IMR-90 (cell line): ENCODE measurements at regions of chr14 and their contacts with region 1.

Region 1: DNA sequence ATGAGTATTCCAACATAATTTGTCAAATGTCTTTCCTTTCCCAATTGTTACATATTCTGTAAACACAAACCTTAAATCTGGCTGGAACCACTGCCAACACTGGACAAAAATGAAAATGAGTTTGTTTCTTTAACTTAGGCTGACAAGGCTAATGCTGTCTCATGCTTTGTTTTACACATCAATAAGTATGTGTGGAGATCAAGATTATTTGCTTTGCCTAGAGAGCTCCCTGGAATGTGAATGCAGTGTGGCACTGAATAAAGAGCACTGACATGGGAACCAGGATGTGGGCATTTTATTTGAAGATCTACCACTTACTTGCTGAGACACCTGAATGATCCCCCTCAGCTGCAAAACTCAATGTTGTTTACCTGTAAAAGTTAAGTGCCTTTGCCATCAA is 61.7 kb downstream of the RALGAPA1 start:
- DNase-seq: peak; percentile 61
- ATAC-seq: peak; percentile 82
- H3K4me3 ChIP-seq: no peak overlapping the region
- H3K27ac ChIP-seq: no peak overlapping the region
- H3K4me1 ChIP-seq: peaks cover 2% of the 10 kb centered on the region; the same call in 1 of the 2 replicates
- H3K27me3 ChIP-seq: no peaks in the 10 kb centered on the region
- CTCF ChIP-seq: no peak
- POLR2A ChIP-seq: no peak
- RAD21 ChIP-seq: no peak

Region 2: GRCh38 chr14:34997762-34998161 is 749.6 kb before region 1 on chr14:
- CTCF ChIA-PET with region 1: no interaction called
- POLR2A ChIA-PET with region 1: no interaction called
- dilution Hi-C with region 1: no loop called
- in situ Hi-C with region 1: no loop called
- intact Hi-C with region 1: no loop called
- DNase-seq: no peak
- ATAC-seq: peak; percentile 57; the same call in 1 of the 2 replicates
- H3K4me3 ChIP-seq: no peak overlapping the region
- H3K27ac ChIP-seq: no peak overlapping the region; the same call in 1 of the 2 replicates
- H3K4me1 ChIP-seq: 0 out of 2 replicates have a peak, but pooled peaks cover 2% of the 10 kb centered on the region
- H3K27me3 ChIP-seq: no peaks in the 10 kb centered on the region
- CTCF ChIP-seq: no peak
- POLR2A ChIP-seq: no peak
- RAD21 ChIP-seq: no peak

Region 3: DNA sequence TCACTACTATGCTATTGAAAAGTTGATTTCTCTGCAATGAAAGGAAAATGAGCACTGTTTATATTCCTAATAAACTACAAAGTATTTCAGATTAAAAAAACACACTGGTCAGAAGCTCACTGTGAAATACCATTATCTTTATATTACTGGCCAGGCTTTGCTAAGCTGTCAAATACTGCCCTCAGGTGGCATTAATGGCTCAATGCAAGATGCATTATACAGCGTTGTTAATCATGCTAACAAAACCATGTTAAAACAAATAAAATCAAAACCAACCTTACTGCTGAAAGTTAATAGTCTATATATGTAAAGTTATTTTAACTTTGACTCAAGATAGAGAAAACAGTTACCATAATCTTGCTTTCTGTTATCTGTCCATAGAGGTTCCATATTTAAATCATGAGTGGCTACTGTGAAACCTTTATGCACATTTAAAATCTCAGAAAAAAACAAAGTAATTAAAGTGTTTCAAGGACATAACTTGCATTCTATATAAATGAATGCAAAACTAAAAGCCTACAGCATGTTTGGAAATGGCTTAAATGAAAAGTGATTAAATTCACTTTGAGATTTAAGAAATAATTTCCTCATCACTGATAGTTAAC is 59.9 kb before region 1 on chr14:
- CTCF ChIA-PET with region 1: no interaction called
- POLR2A ChIA-PET with region 1: no interaction called
- dilution Hi-C with region 1: no loop called
- in situ Hi-C with region 1: no loop called
- intact Hi-C with region 1: no loop called
- DNase-seq: peak; percentile 68
- ATAC-seq: peak; percentile 93
- H3K4me3 ChIP-seq: no peak overlapping the region
- H3K27ac ChIP-seq: no peak overlapping the region
- H3K4me1 ChIP-seq: peaks cover 4% of the 10 kb centered on the region
- H3K27me3 ChIP-seq: no peaks in the 10 kb centered on the region
- CTCF ChIP-seq: peak; percentile 92
- POLR2A ChIP-seq: no peak
- RAD21 ChIP-seq: peak; percentile 94

Region 4: DNA sequence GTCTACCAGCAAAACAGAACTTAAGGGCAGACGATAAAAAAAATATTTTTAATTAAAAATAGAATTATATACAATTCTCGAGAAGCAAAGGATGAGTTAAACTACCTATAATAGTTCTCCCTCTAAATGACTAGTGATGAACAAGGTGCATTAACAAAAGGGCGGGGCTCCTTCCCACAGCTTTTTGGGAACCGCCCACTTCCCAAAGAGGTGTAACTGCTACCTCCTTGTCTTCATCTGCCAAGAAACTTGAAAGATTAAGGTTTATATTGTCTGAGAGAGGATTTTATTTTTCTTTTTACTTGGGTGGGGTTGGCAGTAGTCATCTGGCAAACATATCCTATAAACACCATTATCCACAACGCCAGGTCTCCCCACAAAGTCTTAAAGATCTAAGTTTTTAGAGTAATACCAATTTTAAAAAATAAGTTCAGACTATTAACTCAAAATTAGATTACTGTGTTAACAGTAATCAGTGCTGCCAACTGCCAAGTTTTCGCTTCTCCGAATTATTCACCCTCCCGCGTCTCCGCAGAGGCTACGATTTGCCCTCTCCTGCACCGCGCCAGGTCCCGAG is 60.8 kb after region 1 on chr14:
- CTCF ChIA-PET with region 1: no interaction called
- POLR2A ChIA-PET with region 1: no interaction called
- dilution Hi-C with region 1: no loop called
- in situ Hi-C with region 1: no loop called
- intact Hi-C with region 1: loop called (anchors 5 kb)
- DNase-seq: no peak
- ATAC-seq: no peak
- H3K4me3 ChIP-seq: peak overlapping the region; percentile 99
- H3K27ac ChIP-seq: peak overlapping the region; percentile 91
- H3K4me1 ChIP-seq: peaks cover 2% of the 10 kb centered on the region; the same call in 1 of the 2 replicates
- H3K27me3 ChIP-seq: no peaks in the 10 kb centered on the region
- CTCF ChIP-seq: no peak
- POLR2A ChIP-seq: no peak
- RAD21 ChIP-seq: no peak